ENCODE measurements at regions of chr3 and their contacts with region 1.

Region 1: GRCh38 chr3:188154014-188154808 is at the start of gene LPP:
- DNase-seq: peak; percentile 87
- ATAC-seq: peak; percentile 83
- H3K4me3 Mint-ChIP-seq: peak within 1 kb of the TSS; percentile 75
- H3K27ac Mint-ChIP-seq: peak within 1 kb of the TSS; percentile 92
- H3K4me1 Mint-ChIP-seq: peaks cover 57% of the 10 kb centered on the region
- H3K27me3 Mint-ChIP-seq: no peaks in the 10 kb centered on the region
- CTCF ChIP-seq: no peak
- total RNA-seq, gene LPP: 16.4 to 22.6 TPM

Region 2: GRCh38 chr3:188164248-188164687 is 10.1 kb after region 1 on chr3:
- CTCF ChIA-PET with region 1: interaction called, 4 read pairs
- POLR2A ChIA-PET with region 1: interaction called, 11 read pairs
- intact Hi-C with region 1: no loop called
- DNase-seq: peak; percentile 41
- ATAC-seq: no peak
- H3K4me3 Mint-ChIP-seq: no peak overlapping the region
- H3K27ac Mint-ChIP-seq: peak overlapping the region; percentile 46
- H3K4me1 Mint-ChIP-seq: peaks cover 44% of the 10 kb centered on the region
- H3K27me3 Mint-ChIP-seq: no peaks in the 10 kb centered on the region
- CTCF ChIP-seq: no peak

Region 3: GRCh38 chr3:188178293-188178936 is 24.2 kb after region 1 on chr3:
- CTCF ChIA-PET with region 1: no interaction called
- POLR2A ChIA-PET with region 1: no interaction called
- intact Hi-C with region 1: no loop called
- DNase-seq: no peak
- ATAC-seq: no peak
- H3K4me3 Mint-ChIP-seq: no peak overlapping the region
- H3K27ac Mint-ChIP-seq: no peak overlapping the region
- H3K4me1 Mint-ChIP-seq: peaks cover 32% of the 10 kb centered on the region
- H3K27me3 Mint-ChIP-seq: no peaks in the 10 kb centered on the region
- CTCF ChIP-seq: no peak

Measured in activated CD8-positive, alpha-beta T cell treated with anti-CD3 and anti-CD28 coated beads for 36 hours (primary cell).